ENCODE measurements at regions of chr11 and their contacts with region 1.

Region 1: GRCh38 chr11:20712912-20713311 is 43.5 kb downstream of the NELL1 start:
- DNase-seq: no peak
- H3K4me3 ChIP-seq: no peak overlapping the region
- CTCF ChIP-seq: no peak

Region 2: DNA sequence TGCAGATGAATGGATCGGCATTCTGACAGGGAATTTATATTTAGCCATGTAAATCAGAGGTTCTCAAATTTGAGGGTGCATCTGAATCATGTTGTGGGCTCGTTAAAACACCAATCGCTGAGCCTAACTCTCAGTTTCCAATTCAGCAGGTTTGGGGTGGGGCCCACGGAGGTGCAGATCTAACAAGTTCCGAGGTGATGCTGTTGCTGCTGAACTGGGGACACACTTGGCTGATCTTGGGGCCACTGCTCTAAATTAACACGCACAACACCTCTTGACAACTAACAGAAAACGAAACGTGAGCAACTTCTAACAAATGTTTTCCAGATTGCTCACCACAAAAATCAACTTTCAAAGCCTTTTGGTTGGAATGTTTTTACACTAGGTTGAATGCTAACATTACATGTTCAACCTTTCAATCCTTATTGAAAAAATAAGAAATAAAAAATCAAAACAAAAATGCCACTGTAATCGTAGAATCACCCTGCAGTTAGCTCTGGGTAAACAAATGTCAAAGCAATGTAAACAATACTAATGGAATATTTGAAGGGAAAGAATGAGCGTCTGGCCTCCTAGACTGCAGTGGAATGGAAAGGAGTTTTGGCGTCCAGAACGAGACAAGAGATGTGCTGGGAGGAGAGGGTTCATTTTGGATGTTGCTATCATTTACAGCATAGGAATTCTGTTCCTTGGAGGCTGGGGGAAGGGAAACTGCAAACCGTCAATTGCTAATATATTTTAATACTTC is 181.8 kb before region 1 on chr11:
- in situ Hi-C with region 1: no loop called
- DNase-seq: no peak
- H3K4me3 ChIP-seq: no peak overlapping the region
- CTCF ChIP-seq: no peak

Region 3: DNA sequence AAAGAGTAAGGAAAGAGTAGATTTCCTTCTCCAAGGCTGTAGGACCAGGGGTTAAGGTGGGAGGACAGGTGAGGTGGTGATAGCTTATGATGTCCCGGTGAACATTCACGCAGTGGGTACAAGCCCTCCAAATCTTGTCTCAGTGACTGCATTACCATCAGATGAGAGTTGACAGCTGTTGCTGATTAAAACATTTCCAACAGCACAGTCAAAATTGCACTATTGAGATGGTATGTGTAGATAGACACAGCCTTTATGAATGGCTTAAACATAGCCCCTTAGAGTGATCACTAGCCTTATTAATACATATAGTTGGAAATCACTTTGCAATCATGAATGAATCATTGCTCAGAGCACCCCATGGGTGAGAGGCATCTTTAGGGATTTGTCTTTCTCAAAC is 36.3 kb before region 1 on chr11:
- in situ Hi-C with region 1: loop called (anchors 5 kb)
- DNase-seq: no peak
- H3K4me3 ChIP-seq: no peak overlapping the region
- CTCF ChIP-seq: no peak

Region 4: GRCh38 chr11:20795005-20795404 is 82.1 kb after region 1 on chr11:
- in situ Hi-C with region 1: no loop called
- DNase-seq: no peak
- H3K4me3 ChIP-seq: no peak overlapping the region
- CTCF ChIP-seq: no peak

Region 5: DNA sequence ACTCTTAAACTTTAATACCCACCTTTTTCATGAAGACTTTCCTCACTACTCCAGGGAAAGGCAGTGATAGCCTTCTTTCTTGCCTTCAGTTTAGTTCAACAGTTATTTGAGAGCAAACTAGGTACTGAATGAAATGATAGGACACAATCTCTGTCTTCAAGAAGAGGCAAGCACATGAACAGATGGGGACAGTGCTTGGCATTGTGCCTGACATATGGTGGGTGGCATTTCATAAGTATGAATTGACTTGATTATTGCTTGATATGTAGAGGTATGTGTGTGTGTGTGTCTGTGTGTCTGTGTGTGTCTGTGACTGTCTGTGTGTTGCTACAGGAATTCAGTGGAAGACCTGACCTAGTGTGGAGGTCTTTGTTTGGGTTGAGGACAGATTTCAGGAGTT is 460.6 kb after region 1 on chr11:
- in situ Hi-C with region 1: no loop called
- DNase-seq: no peak
- H3K4me3 ChIP-seq: no peak overlapping the region
- CTCF ChIP-seq: no peak

Measured in astrocyte of the cerebellum (primary cell).